ENCODE measurements at regions of chr5 and their contacts with region 1.

Region 1: GRCh38 chr5:141094481-141095262 is at the start of gene PCDHB2:
- DNase-seq: peak; percentile 79
- ATAC-seq: peak; percentile 98
- H3K4me3 ChIP-seq: peak within 1 kb of the TSS; percentile 55 to 89 (median 82)
- H3K27ac ChIP-seq: peak within 1 kb of the TSS; percentile 56
- H3K4me1 ChIP-seq: peaks cover 11% of the 10 kb centered on the region
- H3K27me3 ChIP-seq: no peaks in the 10 kb centered on the region; a peak in 1 of 5 replicates
- CTCF ChIP-seq: peak; percentile 87
- EP300 ChIP-seq: no peak
- POLR2A ChIP-seq: peak; percentile 59 to 69
- RAD21 ChIP-seq: peak; percentile 69
- total RNA-seq, gene PCDHB2: 3.6 and 7.1 TPM in 2 replicates

Region 2: DNA sequence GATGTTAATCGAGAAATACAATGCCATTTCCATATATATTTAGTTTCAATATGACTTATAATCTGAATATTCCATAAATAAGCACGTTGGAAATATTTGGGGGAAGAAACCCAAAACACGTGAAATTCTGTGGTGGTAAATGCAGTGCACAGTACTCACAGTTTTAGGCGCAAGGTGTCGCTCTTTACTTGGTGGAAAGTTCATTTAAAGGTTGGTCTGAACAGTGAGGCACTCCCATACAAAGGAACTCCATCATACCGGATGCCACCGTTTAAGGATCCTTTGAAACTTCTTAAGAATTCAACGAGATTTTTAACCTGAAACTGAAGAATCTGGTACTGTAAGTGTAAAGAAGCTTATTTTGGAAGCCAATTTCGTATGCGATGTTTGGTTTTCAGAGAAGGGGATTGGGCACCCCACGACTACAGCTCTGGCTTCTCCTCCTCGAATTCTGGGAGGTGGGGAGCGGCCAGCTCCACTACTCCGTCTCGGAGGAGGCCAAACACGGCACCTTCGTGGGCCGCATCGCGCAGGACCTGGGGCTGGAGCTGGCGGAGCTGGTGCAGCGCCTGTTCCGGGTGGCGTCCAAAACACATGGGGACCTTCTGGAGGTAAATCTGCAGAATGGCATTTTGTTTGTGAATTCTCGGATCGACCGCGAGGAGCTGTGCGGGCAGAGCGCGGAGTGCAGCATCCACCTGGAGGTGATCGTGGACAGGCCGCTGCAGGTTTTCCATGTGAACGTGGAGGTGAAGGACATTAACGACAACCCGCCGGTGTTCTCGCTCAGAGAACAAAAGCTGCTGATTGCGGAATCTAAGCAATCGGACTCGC is 225.7 kb before region 1 on chr5 and contains the start of gene PCDHA11:
- CTCF ChIA-PET with region 1: no interaction called
- POLR2A ChIA-PET with region 1: no interaction called
- in situ Hi-C with region 1: no loop called
- intact Hi-C with region 1: no loop called
- DNase-seq: peak; percentile 45
- ATAC-seq: peak; percentile 97
- H3K4me3 ChIP-seq: peak within 1 kb of the TSS in 2 of 3 experiments; percentile 10 to 28; a peak in 1 of 6 replicates
- H3K27ac ChIP-seq: no peak within 1 kb of the TSS
- H3K4me1 ChIP-seq: no peaks in the 10 kb centered on the region
- H3K27me3 ChIP-seq: no peaks in the 10 kb centered on the region
- CTCF ChIP-seq: peak; percentile 73
- EP300 ChIP-seq: no peak
- POLR2A ChIP-seq: no peak
- RAD21 ChIP-seq: no peak
- total RNA-seq, gene PCDHA11: 0.07 and 0.29 TPM in 2 replicates

Region 3: DNA sequence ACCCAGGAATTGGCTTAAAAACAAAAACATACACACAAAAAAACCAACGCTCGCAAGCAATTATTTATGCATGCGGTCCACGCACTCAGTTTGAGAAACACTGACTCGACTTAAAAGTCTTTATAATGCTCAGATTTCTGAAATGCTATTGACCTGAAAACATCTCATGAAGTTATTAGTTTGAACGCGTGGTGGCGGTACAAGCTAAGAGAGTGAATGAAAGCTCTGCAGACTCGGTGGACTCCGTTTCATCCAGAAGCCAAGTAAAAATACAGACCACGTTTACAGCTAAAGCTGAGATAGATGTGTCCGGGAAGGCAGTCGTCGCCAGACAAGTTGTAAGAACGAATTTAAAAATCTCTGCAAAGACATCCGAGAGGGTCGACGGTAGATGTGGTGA is 55.1 kb after region 1 on chr5 and contains the start of gene PCDHB6:
- CTCF ChIA-PET with region 1: no interaction called
- POLR2A ChIA-PET with region 1: no interaction called
- in situ Hi-C with region 1: no loop called
- intact Hi-C with region 1: loop called (anchors 2 kb)
- DNase-seq: peak; percentile 56
- ATAC-seq: peak; percentile 90
- H3K4me3 ChIP-seq: peak within 1 kb of the TSS in 2 of 3 experiments; percentile 18 to 47; a peak in 2 of 6 replicates
- H3K27ac ChIP-seq: no peak within 1 kb of the TSS
- H3K4me1 ChIP-seq: peaks cover 7% of the 10 kb centered on the region; the same call in 1 of the 2 replicates
- H3K27me3 ChIP-seq: peaks cover 0 to 10% of the 10 kb centered on the region in 2 experiments; a peak in 1 of 5 replicates
- CTCF ChIP-seq: peak; percentile 72
- EP300 ChIP-seq: no peak
- POLR2A ChIP-seq: no peak
- RAD21 ChIP-seq: peak; percentile 42; the same call in 1 of the 2 replicates
- total RNA-seq, gene PCDHB6: 0.04 TPM in 1 of 2 replicates, not detected in the other

Region 4: GRCh38 chr5:141182248-141182647 is 87.6 kb after region 1 on chr5 and contains the start of gene PCDHB16:
- CTCF ChIA-PET with region 1: interaction called, 5 read pairs
- POLR2A ChIA-PET with region 1: no interaction called
- in situ Hi-C with region 1: no loop called
- intact Hi-C with region 1: loop called (anchors 2 kb)
- DNase-seq: peak; percentile 53
- ATAC-seq: peak; percentile 89
- H3K4me3 ChIP-seq: peak within 1 kb of the TSS; percentile 35 to 61 (median 58); a peak in 5 of 6 replicates
- H3K27ac ChIP-seq: no peak within 1 kb of the TSS
- H3K4me1 ChIP-seq: no peaks in the 10 kb centered on the region; the same call in 1 of the 2 replicates
- H3K27me3 ChIP-seq: no peaks in the 10 kb centered on the region; a peak in 1 of 5 replicates
- CTCF ChIP-seq: peak; percentile 79
- EP300 ChIP-seq: no peak
- POLR2A ChIP-seq: no peak
- RAD21 ChIP-seq: peak; percentile 56; the same call in 1 of the 2 replicates
- total RNA-seq, gene PCDHB16: 0.41 and 0.60 TPM in 2 replicates

Region 5: GRCh38 chr5:141557681-141558136 is 463.0 kb after region 1 on chr5:
- CTCF ChIA-PET with region 1: no interaction called
- POLR2A ChIA-PET with region 1: no interaction called
- in situ Hi-C with region 1: loop called (anchors 10 kb)
- intact Hi-C with region 1: loop called (anchors 5 kb)
- DNase-seq: peak; percentile 50
- ATAC-seq: peak; percentile 78
- H3K4me3 ChIP-seq: no peak overlapping the region
- H3K27ac ChIP-seq: no peak overlapping the region
- H3K4me1 ChIP-seq: no peaks in the 10 kb centered on the region
- H3K27me3 ChIP-seq: no peaks in the 10 kb centered on the region
- CTCF ChIP-seq: peak; percentile 83
- EP300 ChIP-seq: no peak
- POLR2A ChIP-seq: no peak
- RAD21 ChIP-seq: peak; percentile 73

Measured in HepG2 (cell line).